CD4-positive, alpha-beta memory T cell (primary cell): ENCODE measurements at regions of chr15 and their contacts with region 1.

Region 1: DNA sequence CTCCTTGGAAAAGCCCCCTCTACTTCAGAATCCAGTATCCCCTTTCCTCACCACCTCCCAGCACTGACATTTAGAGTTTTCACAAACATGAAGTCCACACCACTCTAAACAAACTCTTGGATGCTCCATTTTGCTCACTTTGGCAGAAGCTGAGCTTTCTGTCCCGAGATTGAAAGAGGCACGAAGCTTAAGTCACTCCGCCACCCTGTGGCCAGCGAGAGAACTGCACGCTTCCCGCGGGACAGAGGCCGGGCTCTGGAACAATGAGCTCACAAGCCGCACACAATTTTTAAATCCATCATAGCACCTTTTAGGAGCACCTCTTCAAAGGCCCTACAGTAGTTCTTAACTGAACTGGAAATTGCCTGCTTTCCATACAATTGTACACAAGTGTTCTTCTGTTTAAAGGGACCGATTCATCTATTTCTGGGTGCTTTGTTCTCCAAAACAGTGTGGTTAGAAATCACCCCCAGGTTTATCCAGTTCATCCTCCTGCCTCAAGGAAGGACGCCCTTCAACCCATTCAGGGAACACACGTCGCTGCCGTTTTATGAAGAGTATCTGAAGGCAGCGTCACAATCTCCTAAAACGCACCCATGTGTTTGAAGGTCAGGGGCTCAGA is 226.1 kb downstream of the VPS13C start:
- DNase-seq: peak; percentile 55 to 67 (median 60)
- H3K4me3 ChIP-seq: no peak overlapping the region
- H3K4me3 Mint-ChIP-seq: peak overlapping the region in 1 of 8 donors; percentile 18
- H3K27ac ChIP-seq: no peak overlapping the region
- H3K27ac Mint-ChIP-seq: peak overlapping the region in 2 of 7 donors; percentile 12 to 59
- H3K4me1 ChIP-seq: peaks cover 3% of the 10 kb centered on the region
- H3K4me1 Mint-ChIP-seq: peaks cover 5 to 16% (median 9%) of the 10 kb centered on the region in 4 donors
- H3K27me3 ChIP-seq: no peaks in the 10 kb centered on the region
- H3K27me3 Mint-ChIP-seq: peaks cover 4 to 16% of the 10 kb centered on the region in 2 donors

Region 2: DNA sequence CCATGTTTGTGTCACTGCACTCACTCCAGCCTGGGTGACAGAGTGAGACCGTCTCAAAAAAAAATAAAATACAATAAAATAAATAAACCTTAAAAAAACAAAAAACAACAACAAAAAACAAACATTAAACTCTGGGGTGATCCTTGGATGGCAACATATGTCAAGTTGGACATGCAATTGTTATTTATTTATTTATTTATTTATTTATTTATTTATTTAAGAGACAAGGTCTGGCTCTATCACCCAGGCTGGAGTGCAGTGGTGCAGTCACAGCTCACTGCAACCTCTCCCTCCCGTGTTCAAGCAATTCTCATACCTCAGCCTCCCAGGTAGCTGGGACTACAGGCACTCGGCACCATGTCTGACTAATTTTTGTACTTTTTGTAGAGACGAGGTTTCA is 49.5 kb before region 1 on chr15:
- CTCF ChIA-PET with region 1: no interaction called
- POLR2A ChIA-PET with region 1: no interaction called
- intact Hi-C with region 1: no loop called
- DNase-seq: no peak
- H3K4me3 ChIP-seq: no peak overlapping the region
- H3K4me3 Mint-ChIP-seq: no peak overlapping the region
- H3K27ac ChIP-seq: no peak overlapping the region
- H3K27ac Mint-ChIP-seq: no peak overlapping the region
- H3K4me1 ChIP-seq: no peaks in the 10 kb centered on the region
- H3K4me1 Mint-ChIP-seq: no peaks in the 10 kb centered on the region
- H3K27me3 ChIP-seq: no peaks in the 10 kb centered on the region
- H3K27me3 Mint-ChIP-seq: peaks cover 15 to 20% of the 10 kb centered on the region in 2 donors

Region 3: GRCh38 chr15:61811952-61812351 is 22.2 kb before region 1 on chr15:
- CTCF ChIA-PET with region 1: interaction called, 14 read pairs
- POLR2A ChIA-PET with region 1: no interaction called
- intact Hi-C with region 1: no loop called
- DNase-seq: no peak
- H3K4me3 ChIP-seq: no peak overlapping the region
- H3K4me3 Mint-ChIP-seq: no peak overlapping the region
- H3K27ac ChIP-seq: no peak overlapping the region
- H3K27ac Mint-ChIP-seq: no peak overlapping the region
- H3K4me1 ChIP-seq: no peaks in the 10 kb centered on the region
- H3K4me1 Mint-ChIP-seq: no peaks in the 10 kb centered on the region
- H3K27me3 ChIP-seq: no peaks in the 10 kb centered on the region
- H3K27me3 Mint-ChIP-seq: peaks cover 15 to 32% of the 10 kb centered on the region in 2 donors

Region 4: GRCh38 chr15:61857169-61857829 is 23.1 kb after region 1 on chr15:
- CTCF ChIA-PET with region 1: interaction called, 10 read pairs
- POLR2A ChIA-PET with region 1: no interaction called
- intact Hi-C with region 1: no loop called
- DNase-seq: peak; percentile 52 to 73 (median 61)
- H3K4me3 ChIP-seq: peak overlapping the region; percentile 32 to 65
- H3K4me3 Mint-ChIP-seq: no peak overlapping the region
- H3K27ac ChIP-seq: peak overlapping the region; percentile 61
- H3K27ac Mint-ChIP-seq: no peak overlapping the region
- H3K4me1 ChIP-seq: peaks cover 29% of the 10 kb centered on the region
- H3K4me1 Mint-ChIP-seq: peaks cover 0 to 11% (median 10%) of the 10 kb centered on the region in 4 donors
- H3K27me3 ChIP-seq: no peaks in the 10 kb centered on the region
- H3K27me3 Mint-ChIP-seq: no peaks in the 10 kb centered on the region